Posterior vena cava (tissue), 2 donors: ENCODE measurements at regions of chr14 and their contacts with region 1.

Region 1: GRCh38 chr14:64540208-64541157 is at the start of gene HSPA2:
- DNase-seq: peak; percentile 100
- total RNA-seq, gene HSPA2: 32.7 to 49.0 TPM

Region 2: DNA sequence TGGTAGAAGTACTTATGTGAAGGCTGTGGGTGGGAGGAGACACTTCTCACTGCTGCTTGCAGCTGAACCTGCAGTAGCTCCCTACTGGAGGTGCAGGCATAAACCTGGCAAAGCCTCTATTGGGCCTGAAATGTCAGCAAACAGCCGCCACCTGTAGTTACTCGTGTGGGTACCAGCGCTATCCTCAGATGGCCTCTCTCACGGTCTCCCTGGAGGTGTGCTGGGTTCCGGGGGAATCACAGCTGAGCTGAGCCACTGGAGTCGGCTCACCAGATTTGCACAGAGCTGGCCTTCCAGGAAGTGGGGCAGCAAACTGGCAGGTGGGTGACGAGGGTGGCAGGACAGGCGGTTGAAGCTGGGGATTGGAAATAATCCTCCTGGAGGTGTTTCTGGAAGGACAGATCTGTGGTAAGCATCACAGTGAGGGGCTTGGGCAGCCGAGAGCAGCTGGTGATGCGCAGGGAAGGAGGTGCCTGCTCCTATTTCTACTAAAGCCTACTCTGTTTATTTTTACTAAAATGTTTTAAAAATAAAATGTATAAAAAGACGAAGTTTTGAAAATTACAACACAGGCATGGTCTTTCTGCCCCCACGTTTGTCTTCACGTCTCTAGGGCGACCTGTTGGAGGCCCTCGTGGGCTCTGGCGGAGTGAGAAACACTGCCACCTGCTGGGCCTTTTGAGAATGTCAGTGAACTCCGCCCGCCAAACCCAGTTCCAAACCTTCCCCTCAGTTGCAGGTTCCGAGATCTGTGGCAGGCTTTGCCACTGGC is 95.9 kb after region 1 on chr14:
- intact Hi-C with region 1: loop called (anchors 5 to 10 kb)
- DNase-seq: peak; percentile 91